ENCODE measurements at regions of chr5 and their contacts with region 1.

Region 1: DNA sequence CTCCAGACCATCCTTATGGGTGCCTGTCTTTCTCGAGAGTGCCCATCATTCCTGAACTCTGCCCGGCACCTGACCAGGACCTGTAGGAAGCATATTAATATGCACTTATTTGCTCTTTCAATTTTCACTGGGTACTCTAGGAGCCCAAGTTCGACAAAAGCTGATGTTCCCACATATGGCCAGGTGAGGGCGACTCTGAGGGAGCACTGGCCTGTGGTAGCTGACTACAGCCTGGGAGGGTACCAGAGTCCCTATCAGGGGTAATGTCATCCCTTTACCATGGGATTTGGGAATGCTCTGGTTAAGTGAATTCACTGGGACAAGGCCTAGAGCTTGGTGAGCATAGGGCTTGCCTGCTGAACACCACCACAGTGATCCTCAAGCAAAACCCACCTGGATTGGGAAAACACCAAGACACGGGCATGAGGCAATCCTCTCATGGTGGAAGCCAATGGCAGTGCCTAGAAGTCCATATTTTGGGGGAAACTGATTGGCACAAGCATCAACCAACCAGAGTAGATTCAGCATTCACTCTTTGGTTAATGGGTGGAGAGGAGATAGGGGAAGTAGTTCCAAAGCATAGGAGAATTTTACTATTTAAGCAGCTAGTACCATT is 112.2 kb downstream of the MTX3 start:
- DNase-seq: no peak
- ATAC-seq: peak; percentile 61
- H3K4me3 ChIP-seq: no peak overlapping the region
- H3K27ac ChIP-seq: no peak overlapping the region
- H3K4me1 ChIP-seq: no peaks in the 10 kb centered on the region
- H3K27me3 ChIP-seq: peaks cover 0 to 2% of the 10 kb centered on the region in 2 experiments; a peak in 1 of 4 replicates
- CTCF ChIP-seq: peak; percentile 37 to 57 (median 52); a peak in 5 of 6 replicates
- EP300 ChIP-seq: no peak
- POLR2A ChIP-seq: no peak
- RAD21 ChIP-seq: peak; percentile 43

Region 2: GRCh38 chr5:79816014-79816413 is 62.8 kb before region 1 on chr5:
- CTCF ChIA-PET with region 1: no interaction called
- POLR2A ChIA-PET with region 1: no interaction called
- RAD21 ChIA-PET with region 1: no interaction called
- SMC1A ChIA-PET with region 1: no interaction called
- in situ Hi-C with region 1: no loop called
- intact Hi-C with region 1: no loop called
- DNase-seq: no peak
- ATAC-seq: no peak
- H3K4me3 ChIP-seq: no peak overlapping the region
- H3K27ac ChIP-seq: no peak overlapping the region
- H3K4me1 ChIP-seq: no peaks in the 10 kb centered on the region
- H3K27me3 ChIP-seq: no peaks in the 10 kb centered on the region; a peak in 1 of 4 replicates
- CTCF ChIP-seq: no peak
- EP300 ChIP-seq: no peak
- POLR2A ChIP-seq: no peak
- RAD21 ChIP-seq: no peak

Region 3: DNA sequence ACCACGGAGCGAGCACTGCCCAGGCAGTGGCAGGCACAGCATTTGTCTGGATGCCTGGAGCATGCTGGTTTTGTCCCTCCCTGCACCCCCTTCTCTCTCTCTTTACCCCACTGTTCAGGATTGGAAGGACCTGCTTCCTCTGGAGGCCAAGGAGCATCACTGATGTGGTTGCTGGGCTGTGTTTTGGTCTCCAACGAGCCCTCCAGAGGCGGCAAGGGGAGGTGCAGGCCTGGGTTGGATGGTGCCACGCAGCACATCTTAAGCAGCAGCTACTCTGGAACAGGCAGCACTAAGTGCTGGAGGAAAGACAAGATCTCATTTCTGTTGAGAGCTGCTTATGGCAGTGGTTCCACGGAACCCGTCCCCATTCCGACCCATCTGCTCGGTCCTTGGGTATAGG is 49.6 kb before region 1 on chr5:
- CTCF ChIA-PET with region 1: no interaction called
- POLR2A ChIA-PET with region 1: no interaction called
- RAD21 ChIA-PET with region 1: no interaction called
- SMC1A ChIA-PET with region 1: no interaction called
- in situ Hi-C with region 1: no loop called
- intact Hi-C with region 1: no loop called
- DNase-seq: no peak
- ATAC-seq: peak; percentile 70
- H3K4me3 ChIP-seq: no peak overlapping the region
- H3K27ac ChIP-seq: no peak overlapping the region
- H3K4me1 ChIP-seq: no peaks in the 10 kb centered on the region
- H3K27me3 ChIP-seq: peaks cover 0 to 2% of the 10 kb centered on the region in 2 experiments; a peak in 1 of 4 replicates
- CTCF ChIP-seq: peak in 2 of 3 experiments; percentile 39 to 46; a peak in 4 of 6 replicates
- EP300 ChIP-seq: no peak
- POLR2A ChIP-seq: no peak
- RAD21 ChIP-seq: no peak

Region 4: DNA sequence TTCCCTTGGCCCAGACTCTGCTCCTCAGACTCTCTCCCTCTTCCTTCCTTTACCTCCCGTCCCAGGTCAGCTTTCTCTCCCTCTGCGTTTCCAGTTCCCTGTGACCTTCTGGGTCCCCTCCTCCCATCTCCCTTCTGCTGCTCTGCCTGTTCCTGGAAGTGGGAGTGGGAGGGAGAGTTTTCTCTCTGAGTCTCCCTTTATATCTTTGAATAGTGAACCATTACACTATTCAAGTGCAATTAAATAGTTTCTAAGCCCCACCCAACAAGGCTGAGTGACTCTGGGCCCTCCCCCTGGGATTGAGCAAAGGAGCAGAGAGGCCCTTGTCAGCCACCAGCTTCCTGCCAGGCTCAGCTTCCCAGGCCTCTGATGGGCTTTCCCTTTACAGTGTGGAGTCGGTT is 191.1 kb after region 1 on chr5:
- CTCF ChIA-PET with region 1: no interaction called
- POLR2A ChIA-PET with region 1: no interaction called
- RAD21 ChIA-PET with region 1: interaction called, 3 read pairs
- SMC1A ChIA-PET with region 1: no interaction called
- in situ Hi-C with region 1: loop called (anchors 10 kb)
- intact Hi-C with region 1: no loop called
- DNase-seq: no peak
- ATAC-seq: peak; percentile 65; the same call in 2 of the 3 replicates
- H3K4me3 ChIP-seq: no peak overlapping the region
- H3K27ac ChIP-seq: no peak overlapping the region
- H3K4me1 ChIP-seq: peaks cover 12% of the 10 kb centered on the region
- H3K27me3 ChIP-seq: no peaks in the 10 kb centered on the region
- CTCF ChIP-seq: no peak
- EP300 ChIP-seq: no peak
- POLR2A ChIP-seq: no peak
- RAD21 ChIP-seq: no peak